ENCODE measurements at regions of chr9 and their contacts with region 1.

Region 1: DNA sequence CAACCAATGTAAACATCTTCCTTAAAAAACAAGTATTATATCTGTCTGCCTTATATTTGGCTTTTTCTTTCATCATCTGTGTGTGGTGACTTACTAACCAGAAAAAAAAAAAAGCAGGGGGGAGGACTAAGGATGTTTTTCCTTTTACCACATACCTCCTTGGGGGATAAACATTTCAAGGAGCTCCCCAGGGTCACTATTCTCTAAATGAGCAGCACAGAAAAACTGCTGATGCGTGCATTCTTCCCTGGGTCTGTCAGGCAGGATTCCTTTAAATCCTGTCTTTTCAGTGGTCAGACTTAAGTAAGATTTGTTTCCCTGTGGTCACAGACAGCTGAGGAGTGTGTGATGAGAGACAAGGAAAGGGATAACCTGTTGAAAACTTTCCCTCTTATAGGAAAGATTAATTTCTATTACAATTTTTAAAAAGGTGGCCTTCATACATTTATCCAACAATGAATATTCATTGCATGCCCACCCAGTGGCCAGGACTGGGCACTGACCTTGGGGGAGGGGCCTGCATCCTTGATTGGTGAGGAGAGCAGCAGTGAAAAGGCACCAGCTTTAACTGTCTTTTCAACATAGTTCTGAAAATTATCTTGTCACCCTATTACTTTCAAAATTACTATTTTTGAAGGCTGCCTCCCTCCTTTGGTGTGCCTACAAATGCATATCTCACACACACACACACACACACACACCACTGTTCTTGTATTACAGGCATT is 123.1 kb downstream of the TLE4 start:
- DNase-seq: no peak
- ATAC-seq: no peak
- H3K4me3 ChIP-seq: no peak overlapping the region
- H3K4me3 Mint-ChIP-seq: no peak overlapping the region
- H3K27ac ChIP-seq: no peak overlapping the region
- H3K27ac Mint-ChIP-seq: no peak overlapping the region
- H3K4me1 ChIP-seq: peaks cover 13% of the 10 kb centered on the region
- H3K4me1 Mint-ChIP-seq: peaks cover 81% of the 10 kb centered on the region
- H3K27me3 ChIP-seq: no peaks in the 10 kb centered on the region
- H3K27me3 Mint-ChIP-seq: no peaks in the 10 kb centered on the region
- CTCF ChIP-seq: no peak

Region 2: GRCh38 chr9:79134654-79135053 is 560.2 kb before region 1 on chr9:
- CTCF ChIA-PET with region 1: no interaction called
- POLR2A ChIA-PET with region 1: no interaction called
- intact Hi-C with region 1: no loop called
- DNase-seq: no peak
- ATAC-seq: no peak
- H3K4me3 ChIP-seq: no peak overlapping the region
- H3K4me3 Mint-ChIP-seq: no peak overlapping the region
- H3K27ac ChIP-seq: no peak overlapping the region
- H3K27ac Mint-ChIP-seq: no peak overlapping the region
- H3K4me1 ChIP-seq: no peaks in the 10 kb centered on the region
- H3K4me1 Mint-ChIP-seq: no peaks in the 10 kb centered on the region
- H3K27me3 ChIP-seq: no peaks in the 10 kb centered on the region
- H3K27me3 Mint-ChIP-seq: no peaks in the 10 kb centered on the region
- CTCF ChIP-seq: no peak

Region 3: DNA sequence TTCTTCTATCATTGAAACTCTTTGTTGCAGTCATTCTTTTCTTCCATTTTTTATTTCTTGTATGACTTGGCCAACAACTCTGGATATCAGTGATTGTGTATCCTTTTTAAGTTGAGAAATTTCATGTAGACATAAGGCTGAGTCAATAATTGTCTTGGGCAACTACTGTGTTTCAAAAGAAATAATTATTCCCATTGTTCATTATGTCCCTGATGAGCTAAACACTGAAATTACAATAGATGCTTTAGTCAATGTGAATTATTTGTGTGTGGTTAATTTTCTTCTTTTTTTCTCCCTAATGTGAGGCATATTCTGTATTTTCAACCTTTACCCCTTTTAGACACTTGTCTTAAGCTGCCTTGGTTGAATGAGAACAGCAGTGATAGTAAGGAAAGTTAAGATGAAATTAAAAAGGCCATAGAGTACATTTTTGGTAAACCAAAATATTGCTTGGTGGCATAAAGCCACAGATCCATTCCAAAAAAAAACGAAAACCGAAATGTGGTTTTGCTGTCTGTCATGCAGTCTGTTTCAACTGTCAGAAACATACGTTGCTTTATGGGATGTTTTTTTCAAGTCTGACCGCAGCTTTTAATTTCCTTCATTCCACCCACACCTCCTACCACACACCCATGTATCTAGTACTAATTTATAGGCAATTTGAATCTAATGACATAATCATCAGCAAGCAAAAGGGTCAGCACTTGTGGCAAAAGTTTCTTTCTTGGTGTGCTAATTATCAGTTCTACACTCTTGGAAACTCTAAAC is 101.9 kb before region 1 on chr9:
- CTCF ChIA-PET with region 1: no interaction called
- POLR2A ChIA-PET with region 1: no interaction called
- intact Hi-C with region 1: no loop called
- DNase-seq: peak in 4 of 14 experiments; percentile 26 to 75 (median 63)
- ATAC-seq: peak; percentile 91
- H3K4me3 ChIP-seq: no peak overlapping the region
- H3K4me3 Mint-ChIP-seq: peak overlapping the region; percentile 76
- H3K27ac ChIP-seq: no peak overlapping the region
- H3K27ac Mint-ChIP-seq: peak overlapping the region; percentile 72
- H3K4me1 ChIP-seq: peaks cover 14% of the 10 kb centered on the region
- H3K4me1 Mint-ChIP-seq: peaks cover 87% of the 10 kb centered on the region
- H3K27me3 ChIP-seq: no peaks in the 10 kb centered on the region
- H3K27me3 Mint-ChIP-seq: no peaks in the 10 kb centered on the region
- CTCF ChIP-seq: no peak

Region 4: GRCh38 chr9:79662537-79662956 is 32.3 kb before region 1 on chr9:
- CTCF ChIA-PET with region 1: no interaction called
- POLR2A ChIA-PET with region 1: no interaction called
- intact Hi-C with region 1: loop called in 1 of 2 experiments (anchors 5 kb)
- DNase-seq: peak in 3 of 14 experiments; percentile 20 to 42 (median 39)
- ATAC-seq: peak; percentile 58
- H3K4me3 ChIP-seq: no peak overlapping the region
- H3K4me3 Mint-ChIP-seq: peak overlapping the region; percentile 32
- H3K27ac ChIP-seq: no peak overlapping the region
- H3K27ac Mint-ChIP-seq: peak overlapping the region; percentile 52
- H3K4me1 ChIP-seq: peaks cover 11% of the 10 kb centered on the region
- H3K4me1 Mint-ChIP-seq: peaks cover 69% of the 10 kb centered on the region
- H3K27me3 ChIP-seq: no peaks in the 10 kb centered on the region
- H3K27me3 Mint-ChIP-seq: no peaks in the 10 kb centered on the region
- CTCF ChIP-seq: no peak